ENCODE measurements at regions of chr3 and their contacts with region 1.

Region 1: DNA sequence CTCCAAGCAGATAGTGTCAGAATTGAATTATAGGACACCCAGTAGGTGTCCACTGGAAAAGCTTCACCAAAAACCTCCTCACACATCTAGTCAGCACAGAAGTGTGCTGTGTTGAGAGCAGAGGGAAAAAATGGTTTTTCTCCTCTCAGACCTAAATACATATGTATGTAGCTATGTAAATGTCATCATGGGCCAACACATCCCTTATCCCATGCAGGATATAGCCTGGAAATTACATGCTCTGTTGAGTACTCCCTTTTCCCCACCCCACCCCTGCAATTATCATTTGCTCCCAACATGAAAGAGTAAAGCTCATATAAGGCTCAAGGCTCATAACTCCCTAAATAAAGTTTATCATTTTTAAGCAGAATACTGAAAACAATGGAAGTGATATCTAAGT is 35.7 kb downstream of the DLG1 start:
- DNase-seq: no peak
- H3K4me3 ChIP-seq: no peak overlapping the region
- H3K27ac ChIP-seq: no peak overlapping the region
- H3K27me3 ChIP-seq: no peaks in the 10 kb centered on the region
- CTCF ChIP-seq: no peak

Region 2: GRCh38 chr3:197181741-197182140 is 81.0 kb before region 1 on chr3:
- CTCF ChIA-PET with region 1: no interaction called
- POLR2A ChIA-PET with region 1: no interaction called
- DNase-seq: peak; percentile 23
- H3K4me3 ChIP-seq: no peak overlapping the region
- H3K27ac ChIP-seq: no peak overlapping the region
- H3K27me3 ChIP-seq: no peaks in the 10 kb centered on the region
- CTCF ChIP-seq: no peak

Region 3: GRCh38 chr3:197209366-197210260 is 53.1 kb before region 1 on chr3:
- CTCF ChIA-PET with region 1: no interaction called
- POLR2A ChIA-PET with region 1: no interaction called
- DNase-seq: no peak
- H3K4me3 ChIP-seq: no peak overlapping the region
- H3K27ac ChIP-seq: no peak overlapping the region
- H3K27me3 ChIP-seq: no peaks in the 10 kb centered on the region
- CTCF ChIP-seq: no peak

Region 4: GRCh38 chr3:197406266-197406665 is 143.6 kb after region 1 on chr3:
- CTCF ChIA-PET with region 1: interaction called, 12 read pairs
- POLR2A ChIA-PET with region 1: no interaction called
- DNase-seq: no peak
- H3K4me3 ChIP-seq: no peak overlapping the region
- H3K27ac ChIP-seq: no peak overlapping the region
- H3K27me3 ChIP-seq: peaks cover 30% of the 10 kb centered on the region
- CTCF ChIP-seq: no peak

Measured in AG04450 (cell line).